B cell (primary cell): ENCODE measurements at regions of chr6 and their contacts with region 1.

Region 1: DNA sequence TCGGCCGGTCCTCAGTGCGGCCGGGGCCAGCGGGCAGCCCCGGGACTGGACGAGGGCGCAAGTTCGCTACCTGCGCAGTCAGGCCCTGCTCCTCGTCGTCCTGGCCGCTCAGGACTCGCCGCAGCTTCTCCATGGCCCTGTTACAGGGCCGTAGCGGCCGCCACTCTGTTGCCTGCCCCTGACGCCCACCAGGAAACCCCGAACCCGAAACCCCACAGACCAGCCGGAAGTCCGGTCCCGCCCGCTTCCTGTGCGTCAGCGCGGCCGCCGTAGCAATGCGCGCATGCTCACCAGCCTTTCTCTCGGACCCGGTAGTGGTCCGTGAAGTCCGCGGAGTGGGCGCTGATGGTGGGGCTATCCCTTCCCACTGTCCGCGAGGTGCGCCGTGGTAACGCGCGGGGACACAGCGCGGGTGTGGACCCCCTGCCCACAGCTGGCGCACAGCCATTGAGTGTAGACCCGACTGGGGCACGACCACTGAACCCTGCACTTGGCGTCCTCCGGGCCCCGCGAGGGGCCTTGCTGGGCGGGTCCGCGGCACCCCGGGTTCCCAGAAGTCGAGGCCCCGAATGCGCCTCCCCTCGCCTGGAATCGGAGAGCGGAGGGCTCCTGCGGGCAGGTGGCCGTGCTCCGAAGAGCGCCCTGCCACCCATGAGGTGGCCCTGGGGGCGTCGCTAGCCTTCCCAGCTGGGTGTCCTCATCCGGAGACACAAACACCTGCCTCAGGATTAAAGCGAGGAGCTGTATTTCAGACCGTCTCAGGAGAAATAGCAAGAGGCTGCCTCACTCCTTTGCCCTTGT is at the start of gene SFT2D1:
- DNase-seq: peak; percentile 89
- ATAC-seq: peak; percentile 79
- H3K4me3 ChIP-seq: peak within 1 kb of the TSS; percentile 91 to 100 (median 97)
- H3K4me3 Mint-ChIP-seq: peak within 1 kb of the TSS; percentile 90
- H3K27ac ChIP-seq: peak within 1 kb of the TSS; percentile 99 to 100
- H3K27ac Mint-ChIP-seq: peak within 1 kb of the TSS; percentile 97
- H3K4me1 ChIP-seq: peaks cover 34 to 44% of the 10 kb centered on the region in 2 donors
- H3K4me1 Mint-ChIP-seq: peaks cover 17% of the 10 kb centered on the region
- H3K27me3 ChIP-seq: no peaks in the 10 kb centered on the region
- H3K27me3 Mint-ChIP-seq: no peaks in the 10 kb centered on the region
- CTCF ChIP-seq: no peak
- total RNA-seq, gene SFT2D1: 52.0 and 59.0 TPM in 2 replicates

Region 2: DNA sequence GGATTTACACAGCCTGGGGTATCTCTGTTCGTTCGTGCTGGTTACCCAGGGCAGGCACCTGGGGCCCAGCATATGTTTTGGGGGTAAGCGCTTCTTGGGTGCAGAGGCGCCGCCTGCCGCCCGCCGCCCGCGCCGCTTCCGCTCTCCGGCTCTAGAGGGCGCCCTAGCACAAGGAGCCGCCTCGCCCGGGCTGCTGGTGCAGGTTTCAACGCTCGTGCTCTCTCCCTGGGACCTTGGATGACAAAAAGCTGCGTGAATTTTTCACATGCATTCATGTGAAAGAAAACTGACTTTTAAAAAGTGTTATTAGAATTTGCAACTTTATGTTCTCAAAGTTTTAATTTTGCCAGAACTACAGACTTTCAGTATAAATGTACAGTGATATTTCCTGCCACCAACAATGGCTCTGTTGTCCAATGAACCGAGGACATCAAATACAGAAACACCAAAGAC is 66.8 kb before region 1 on chr6:
- CTCF ChIA-PET with region 1: interaction called, 3 read pairs
- POLR2A ChIA-PET with region 1: no interaction called
- intact Hi-C with region 1: loop called (anchors 2 kb)
- DNase-seq: peak; percentile 82
- ATAC-seq: peak; percentile 89
- H3K4me3 ChIP-seq: no peak overlapping the region
- H3K4me3 Mint-ChIP-seq: no peak overlapping the region
- H3K27ac ChIP-seq: no peak overlapping the region
- H3K27ac Mint-ChIP-seq: no peak overlapping the region
- H3K4me1 ChIP-seq: peaks cover 0 to 8% of the 10 kb centered on the region in 2 donors
- H3K4me1 Mint-ChIP-seq: peaks cover 14% of the 10 kb centered on the region
- H3K27me3 ChIP-seq: no peaks in the 10 kb centered on the region
- H3K27me3 Mint-ChIP-seq: peaks cover 2% of the 10 kb centered on the region
- CTCF ChIP-seq: peak; percentile 100

Region 3: GRCh38 chr6:166286839-166287271 is 55.7 kb before region 1 on chr6:
- CTCF ChIA-PET with region 1: no interaction called
- POLR2A ChIA-PET with region 1: no interaction called
- intact Hi-C with region 1: loop called (anchors 2 kb)
- DNase-seq: peak; percentile 77
- ATAC-seq: peak; percentile 89
- H3K4me3 ChIP-seq: peak overlapping the region in 3 of 5 experiments; percentile 7 to 27 (median 20)
- H3K4me3 Mint-ChIP-seq: peak overlapping the region; percentile 87
- H3K27ac ChIP-seq: peak overlapping the region; percentile 65 to 66
- H3K27ac Mint-ChIP-seq: peak overlapping the region; percentile 93
- H3K4me1 ChIP-seq: peaks cover 19 to 21% of the 10 kb centered on the region in 2 donors
- H3K4me1 Mint-ChIP-seq: peaks cover 19% of the 10 kb centered on the region
- H3K27me3 ChIP-seq: no peaks in the 10 kb centered on the region
- H3K27me3 Mint-ChIP-seq: peaks cover 10% of the 10 kb centered on the region
- CTCF ChIP-seq: no peak

Region 4: GRCh38 chr6:166956444-166957086 is 614.0 kb after region 1 on chr6 and contains the start of gene RNASET2:
- CTCF ChIA-PET with region 1: no interaction called
- POLR2A ChIA-PET with region 1: no interaction called
- intact Hi-C with region 1: loop called (anchors 5 kb)
- DNase-seq: peak; percentile 96
- ATAC-seq: peak; percentile 85
- H3K4me3 ChIP-seq: peak within 1 kb of the TSS; percentile 79 to 97 (median 89)
- H3K4me3 Mint-ChIP-seq: peak within 1 kb of the TSS; percentile 93
- H3K27ac ChIP-seq: peak within 1 kb of the TSS; percentile 94 to 98
- H3K27ac Mint-ChIP-seq: peak within 1 kb of the TSS; percentile 100
- H3K4me1 ChIP-seq: peaks cover 65 to 78% of the 10 kb centered on the region in 2 donors
- H3K4me1 Mint-ChIP-seq: peaks cover 73% of the 10 kb centered on the region
- H3K27me3 ChIP-seq: no peaks in the 10 kb centered on the region
- H3K27me3 Mint-ChIP-seq: no peaks in the 10 kb centered on the region
- CTCF ChIP-seq: no peak
- total RNA-seq, gene RNASET2: 293 and 302 TPM in 2 replicates